ENCODE measurements at regions of chr1 and their contacts with region 1.

Region 1: DNA sequence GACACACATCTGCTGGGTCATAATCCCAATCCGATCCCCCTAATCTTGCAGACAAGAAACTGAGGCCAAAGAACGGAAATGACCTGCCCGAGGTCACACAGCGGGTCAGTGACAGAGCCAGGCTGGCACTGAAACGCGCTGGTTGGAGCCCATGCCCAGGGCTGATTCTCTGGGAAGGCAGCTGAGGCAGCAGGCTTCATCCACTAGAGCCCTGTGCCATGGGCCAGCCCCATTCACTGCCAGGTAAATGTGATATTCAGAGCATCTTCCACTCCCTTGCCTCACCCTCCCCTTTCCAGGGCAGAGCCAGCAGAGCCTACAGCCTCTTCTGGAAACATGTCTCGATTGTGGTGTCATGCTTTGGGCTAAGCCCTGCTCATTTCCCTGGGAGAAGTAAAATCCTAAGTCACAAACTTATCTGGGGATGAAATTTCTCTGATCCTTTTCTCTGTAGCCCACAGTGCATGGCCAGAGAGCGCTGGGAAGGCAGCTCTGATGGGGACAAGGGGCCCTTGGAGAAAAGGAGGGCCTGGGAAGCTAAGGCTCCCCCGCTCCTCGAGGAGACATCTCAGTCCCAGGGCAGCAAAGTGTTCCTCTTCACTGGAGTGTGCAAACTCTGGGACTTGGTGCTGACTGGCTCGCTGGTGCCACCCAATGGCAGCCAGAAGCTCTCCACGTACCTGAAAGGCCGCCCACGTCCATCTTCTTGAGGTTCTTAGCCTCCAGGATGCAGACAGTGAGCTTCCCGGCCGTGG is 110.4 kb downstream of the SYT2 start:
- DNase-seq: peak; percentile 60 to 78
- H3K4me3 ChIP-seq: no peak overlapping the region
- H3K27ac ChIP-seq: peak overlapping the region; percentile 51 to 62
- H3K4me1 ChIP-seq: peaks cover 0 to 9% (median 4%) of the 10 kb centered on the region in 4 donors
- H3K27me3 ChIP-seq: no peaks in the 10 kb centered on the region
- CTCF ChIP-seq: peak; percentile 76 to 84

Region 2: GRCh38 chr1:202438432-202439174 is 161.3 kb before region 1 on chr1:
- intact Hi-C with region 1: no loop called
- DNase-seq: no peak
- H3K4me3 ChIP-seq: no peak overlapping the region
- H3K27ac ChIP-seq: no peak overlapping the region
- H3K4me1 ChIP-seq: no peaks in the 10 kb centered on the region
- H3K27me3 ChIP-seq: no peaks in the 10 kb centered on the region
- CTCF ChIP-seq: no peak

Region 3: DNA sequence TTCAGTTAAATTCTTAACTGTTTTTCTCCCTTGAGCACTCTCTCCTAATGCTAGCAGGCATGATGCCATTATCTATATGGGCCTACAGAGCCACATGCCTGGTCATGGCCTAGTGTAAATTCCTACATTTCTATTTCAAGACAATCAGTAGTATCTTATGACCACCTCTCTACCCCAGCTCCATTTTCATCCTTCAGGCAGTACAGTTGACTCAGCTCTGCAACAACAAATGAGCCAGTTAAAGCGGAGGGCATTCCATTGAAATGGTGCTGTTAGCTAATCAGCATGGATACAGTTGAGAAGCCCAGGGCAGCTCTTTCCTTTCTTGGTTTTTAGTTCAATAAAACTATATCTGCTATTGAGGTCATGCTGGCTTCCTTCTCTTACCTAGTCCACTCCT is 101.3 kb before region 1 on chr1:
- intact Hi-C with region 1: loop called (anchors 10 kb)
- DNase-seq: no peak
- H3K4me3 ChIP-seq: no peak overlapping the region
- H3K27ac ChIP-seq: peak overlapping the region in 1 of 2 donors; percentile 45
- H3K4me1 ChIP-seq: peaks cover 0 to 33% (median under 1%) of the 10 kb centered on the region in 4 donors
- H3K27me3 ChIP-seq: no peaks in the 10 kb centered on the region
- CTCF ChIP-seq: no peak

Region 4: DNA sequence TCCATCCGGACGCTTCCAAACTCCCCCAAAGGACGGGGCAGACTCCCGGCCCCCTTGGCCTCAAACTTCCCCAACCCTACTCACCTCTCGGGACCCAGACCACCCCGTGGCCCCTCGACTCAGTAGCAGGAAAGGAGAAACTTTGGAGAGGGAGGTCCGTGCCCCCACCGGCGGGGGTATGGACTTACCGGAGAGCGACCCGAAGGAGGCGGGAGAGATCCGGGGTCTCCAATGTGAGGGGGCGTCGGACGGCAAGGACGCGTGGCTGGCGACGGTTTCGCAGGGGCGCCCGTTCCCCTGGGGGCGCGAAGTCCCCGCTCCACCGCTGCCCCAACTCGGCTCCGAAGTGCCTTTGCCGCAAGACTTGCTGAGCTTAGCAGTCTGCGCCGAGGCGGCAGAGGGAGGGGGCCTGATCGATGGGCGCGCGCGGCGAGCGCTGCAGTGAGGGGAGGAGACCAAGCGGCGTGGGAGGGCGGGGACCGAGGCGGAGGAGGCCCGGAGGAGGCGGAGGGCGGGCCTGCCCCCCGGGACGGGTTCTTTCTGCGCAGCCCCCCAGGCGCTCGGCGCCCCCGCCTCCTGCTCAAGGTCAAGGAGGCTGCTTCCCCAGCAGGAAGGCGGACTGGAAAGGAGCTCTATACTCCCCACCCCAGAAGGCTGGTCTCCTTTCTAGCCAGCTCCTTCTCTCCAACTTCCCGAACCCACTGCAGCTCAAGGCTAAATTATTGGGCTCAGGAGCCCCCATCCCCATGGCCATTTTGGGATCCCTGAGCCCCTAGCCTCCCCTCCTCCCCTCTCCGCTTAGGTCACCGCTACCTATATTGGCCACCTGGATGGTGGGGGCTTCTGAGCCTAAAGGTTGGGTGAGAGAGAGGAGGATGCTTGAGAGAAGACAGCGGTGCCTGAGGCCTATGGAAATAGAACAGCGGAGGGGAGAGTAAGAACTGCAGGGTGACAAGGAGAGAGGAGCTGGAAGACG is 110.5 kb after region 1 on chr1 and contains the start of gene SYT2:
- intact Hi-C with region 1: no loop called
- DNase-seq: no peak
- H3K4me3 ChIP-seq: peak within 1 kb of the TSS; percentile 19 to 42
- H3K27ac ChIP-seq: no peak within 1 kb of the TSS
- H3K4me1 ChIP-seq: peaks cover 0 to 22% (median 16%) of the 10 kb centered on the region in 4 donors
- H3K27me3 ChIP-seq: peaks cover 0 to 63% of the 10 kb centered on the region in 2 donors
- CTCF ChIP-seq: no peak

Measured in tibial artery (tissue), 4 donors.